ENCODE measurements at regions of chr14 and their contacts with region 1.

Region 1: GRCh38 chr14:30375296-30375892 is 183.6 kb upstream of the G2E3 start:
- DNase-seq: peak; percentile 49 to 64 (median 56)
- ATAC-seq: peak; percentile 99
- H3K4me3 ChIP-seq: no peak overlapping the region
- H3K27ac ChIP-seq: no peak overlapping the region
- H3K4me1 ChIP-seq: peaks cover 0 to 5% of the 10 kb centered on the region in 2 experiments; a peak in 3 of 5 replicates
- H3K27me3 ChIP-seq: no peaks in the 10 kb centered on the region
- CTCF ChIP-seq: peak; percentile 67 to 80 (median 78)
- EP300 ChIP-seq: no peak
- POLR2A ChIP-seq: no peak
- RAD21 ChIP-seq: peak; percentile 34 to 63

Region 2: GRCh38 chr14:30443368-30444007 is 68.1 kb after region 1 on chr14:
- CTCF ChIA-PET with region 1: no interaction called
- POLR2A ChIA-PET with region 1: no interaction called
- in situ Hi-C with region 1: no loop called
- intact Hi-C with region 1: loop called (anchors 1 kb)
- DNase-seq: peak in 1 of 4 experiments; percentile 23
- ATAC-seq: no peak
- H3K4me3 ChIP-seq: no peak overlapping the region
- H3K27ac ChIP-seq: no peak overlapping the region
- H3K4me1 ChIP-seq: no peaks in the 10 kb centered on the region
- H3K27me3 ChIP-seq: no peaks in the 10 kb centered on the region
- CTCF ChIP-seq: peak in 2 of 3 experiments; percentile 31 to 44; a peak in 2 of 6 replicates
- EP300 ChIP-seq: no peak
- POLR2A ChIP-seq: no peak
- RAD21 ChIP-seq: peak in 1 of 2 experiments; percentile 55; a peak in 3 of 4 replicates

Region 3: GRCh38 chr14:30521899-30522736 is 146.7 kb after region 1 on chr14:
- CTCF ChIA-PET with region 1: interaction called, 5 read pairs
- POLR2A ChIA-PET with region 1: no interaction called
- in situ Hi-C with region 1: no loop called
- intact Hi-C with region 1: loop called (anchors 1 kb)
- DNase-seq: peak; percentile 20 to 49 (median 26)
- ATAC-seq: 0 out of 3 replicates have a peak, but pooled peaks have one; percentile 41
- H3K4me3 ChIP-seq: no peak overlapping the region
- H3K27ac ChIP-seq: no peak overlapping the region
- H3K4me1 ChIP-seq: no peaks in the 10 kb centered on the region
- H3K27me3 ChIP-seq: no peaks in the 10 kb centered on the region
- CTCF ChIP-seq: peak; percentile 26 to 76 (median 36); a peak in 4 of 6 replicates
- EP300 ChIP-seq: no peak
- POLR2A ChIP-seq: no peak
- RAD21 ChIP-seq: peak; percentile 65 to 77

Region 4: GRCh38 chr14:30610787-30611343 is 235.5 kb after region 1 on chr14:
- CTCF ChIA-PET with region 1: no interaction called
- POLR2A ChIA-PET with region 1: no interaction called
- in situ Hi-C with region 1: no loop called
- intact Hi-C with region 1: loop called (anchors 10 kb)
- DNase-seq: peak in 3 of 4 experiments; percentile 10 to 68 (median 38)
- ATAC-seq: peak; percentile 88
- H3K4me3 ChIP-seq: no peak overlapping the region
- H3K27ac ChIP-seq: no peak overlapping the region
- H3K4me1 ChIP-seq: no peaks in the 10 kb centered on the region
- H3K27me3 ChIP-seq: no peaks in the 10 kb centered on the region
- CTCF ChIP-seq: peak in 2 of 3 experiments; percentile 37 to 58; a peak in 2 of 6 replicates
- EP300 ChIP-seq: no peak
- POLR2A ChIP-seq: no peak
- RAD21 ChIP-seq: peak; percentile 51 to 63; a peak in 3 of 4 replicates

Region 5: GRCh38 chr14:30638926-30639325 is 263.5 kb after region 1 on chr14:
- CTCF ChIA-PET with region 1: no interaction called
- POLR2A ChIA-PET with region 1: no interaction called
- in situ Hi-C with region 1: no loop called
- intact Hi-C with region 1: no loop called
- DNase-seq: no peak
- ATAC-seq: no peak
- H3K4me3 ChIP-seq: no peak overlapping the region
- H3K27ac ChIP-seq: no peak overlapping the region
- H3K4me1 ChIP-seq: no peaks in the 10 kb centered on the region
- H3K27me3 ChIP-seq: no peaks in the 10 kb centered on the region
- CTCF ChIP-seq: no peak
- EP300 ChIP-seq: no peak
- POLR2A ChIP-seq: no peak
- RAD21 ChIP-seq: no peak

Measured in K562 (cell line).